Activated B cell treated with CpG ODN at 0.5 μM for 24 hours (primary cell): ENCODE measurements at regions of chr1 and their contacts with region 1.

Region 1: GRCh38 chr1:110034451-110035235 is at the start of gene STRIP1:
- DNase-seq: peak; percentile 81
- ATAC-seq: peak; percentile 92
- H3K4me3 Mint-ChIP-seq: peak within 1 kb of the TSS; percentile 93
- H3K27ac Mint-ChIP-seq: peak within 1 kb of the TSS; percentile 90
- H3K4me1 Mint-ChIP-seq: peaks cover 41% of the 10 kb centered on the region
- H3K27me3 Mint-ChIP-seq: no peaks in the 10 kb centered on the region
- CTCF ChIP-seq: no peak
- total RNA-seq, gene STRIP1: 60.4 and 77.3 TPM in 2 replicates

Region 2: GRCh38 chr1:109099938-109100773 is 934.5 kb before region 1 on chr1:
- CTCF ChIA-PET with region 1: no interaction called
- POLR2A ChIA-PET with region 1: interaction called, 3 read pairs
- intact Hi-C with region 1: loop called (anchors 1 kb)
- DNase-seq: peak; percentile 93
- ATAC-seq: peak; percentile 88
- H3K4me3 Mint-ChIP-seq: peak overlapping the region; percentile 95
- H3K27ac Mint-ChIP-seq: peak overlapping the region; percentile 98
- H3K4me1 Mint-ChIP-seq: peaks cover 19% of the 10 kb centered on the region
- H3K27me3 Mint-ChIP-seq: no peaks in the 10 kb centered on the region
- CTCF ChIP-seq: peak; percentile 37

Region 3: DNA sequence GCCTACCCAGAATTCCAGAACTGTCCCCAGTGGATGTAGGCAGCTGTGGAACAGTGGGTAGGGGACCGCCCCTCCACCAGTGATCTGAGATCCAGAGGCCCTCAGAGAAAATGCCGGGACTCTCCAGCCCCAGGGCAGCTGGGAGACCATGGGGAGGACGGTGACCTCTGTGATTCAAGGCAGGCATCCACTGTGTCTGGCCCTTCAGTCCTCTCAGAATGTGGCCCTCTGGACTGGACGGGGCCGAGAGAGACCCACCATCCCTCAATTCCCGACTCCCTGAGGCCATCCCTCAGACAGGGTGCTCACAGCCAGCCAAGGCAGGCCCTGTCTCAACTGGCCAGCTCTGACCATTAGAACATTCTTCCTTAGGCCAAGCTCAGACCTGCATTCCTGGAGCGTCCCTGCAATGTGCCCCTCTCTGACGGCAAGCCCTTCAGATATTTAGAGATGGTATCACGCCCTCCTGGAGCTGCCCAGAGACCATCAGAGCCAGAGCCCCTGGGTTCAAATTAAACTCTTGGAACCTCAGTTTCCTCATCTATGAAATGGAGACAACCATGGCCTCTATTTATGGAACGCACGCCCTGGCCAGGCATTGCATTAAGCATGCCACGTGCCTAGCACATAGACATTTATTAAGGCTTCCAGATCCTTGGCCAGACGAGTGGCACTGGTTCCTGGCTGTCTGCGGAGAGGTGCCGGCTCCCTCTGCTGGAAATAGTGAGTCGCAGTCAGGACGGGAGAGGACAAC is 261.3 kb before region 1 on chr1:
- CTCF ChIA-PET with region 1: interaction called, 5 read pairs
- POLR2A ChIA-PET with region 1: interaction called, 6 read pairs
- intact Hi-C with region 1: loop called (anchors 1 kb)
- DNase-seq: peak; percentile 37
- ATAC-seq: peak; percentile 81
- H3K4me3 Mint-ChIP-seq: no peak overlapping the region
- H3K27ac Mint-ChIP-seq: no peak overlapping the region
- H3K4me1 Mint-ChIP-seq: peaks cover 3% of the 10 kb centered on the region
- H3K27me3 Mint-ChIP-seq: peaks cover 12% of the 10 kb centered on the region
- CTCF ChIP-seq: no peak

Region 4: DNA sequence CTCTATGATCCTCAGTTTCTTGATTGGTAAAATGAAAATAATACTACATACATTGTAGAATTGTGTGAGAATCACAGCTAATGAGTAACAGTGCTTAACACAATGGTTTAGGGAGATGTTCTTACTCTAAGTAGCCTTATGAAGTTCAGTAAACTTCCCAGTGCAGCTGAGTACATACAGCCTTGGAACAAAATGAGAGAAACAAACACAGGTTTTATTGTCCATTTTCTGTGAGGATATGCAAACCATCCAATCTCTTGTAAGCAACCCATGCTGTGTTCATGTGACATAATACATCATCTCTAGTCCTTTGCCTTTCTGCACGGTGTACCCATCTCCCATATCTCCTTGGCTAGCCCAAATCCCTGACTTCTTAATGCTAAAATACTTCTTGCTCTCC is 14.9 kb before region 1 on chr1:
- CTCF ChIA-PET with region 1: interaction called, 28 read pairs
- POLR2A ChIA-PET with region 1: interaction called, 3 read pairs
- intact Hi-C with region 1: no loop called
- DNase-seq: no peak
- ATAC-seq: no peak
- H3K4me3 Mint-ChIP-seq: no peak overlapping the region
- H3K27ac Mint-ChIP-seq: no peak overlapping the region
- H3K4me1 Mint-ChIP-seq: peaks cover 10% of the 10 kb centered on the region
- H3K27me3 Mint-ChIP-seq: no peaks in the 10 kb centered on the region
- CTCF ChIP-seq: no peak

Region 5: GRCh38 chr1:110407260-110408210 is 372.9 kb after region 1 on chr1 and contains the start of gene LAMTOR5:
- CTCF ChIA-PET with region 1: no interaction called
- POLR2A ChIA-PET with region 1: interaction called, 8 read pairs
- intact Hi-C with region 1: loop called (anchors 2 kb)
- DNase-seq: peak; percentile 84
- ATAC-seq: peak; percentile 91
- H3K4me3 Mint-ChIP-seq: peak within 1 kb of the TSS; percentile 97
- H3K27ac Mint-ChIP-seq: peak within 1 kb of the TSS; percentile 96
- H3K4me1 Mint-ChIP-seq: peaks cover 26% of the 10 kb centered on the region
- H3K27me3 Mint-ChIP-seq: no peaks in the 10 kb centered on the region
- CTCF ChIP-seq: no peak
- total RNA-seq, gene LAMTOR5: 160 and 172 TPM in 2 replicates

Region 6: DNA sequence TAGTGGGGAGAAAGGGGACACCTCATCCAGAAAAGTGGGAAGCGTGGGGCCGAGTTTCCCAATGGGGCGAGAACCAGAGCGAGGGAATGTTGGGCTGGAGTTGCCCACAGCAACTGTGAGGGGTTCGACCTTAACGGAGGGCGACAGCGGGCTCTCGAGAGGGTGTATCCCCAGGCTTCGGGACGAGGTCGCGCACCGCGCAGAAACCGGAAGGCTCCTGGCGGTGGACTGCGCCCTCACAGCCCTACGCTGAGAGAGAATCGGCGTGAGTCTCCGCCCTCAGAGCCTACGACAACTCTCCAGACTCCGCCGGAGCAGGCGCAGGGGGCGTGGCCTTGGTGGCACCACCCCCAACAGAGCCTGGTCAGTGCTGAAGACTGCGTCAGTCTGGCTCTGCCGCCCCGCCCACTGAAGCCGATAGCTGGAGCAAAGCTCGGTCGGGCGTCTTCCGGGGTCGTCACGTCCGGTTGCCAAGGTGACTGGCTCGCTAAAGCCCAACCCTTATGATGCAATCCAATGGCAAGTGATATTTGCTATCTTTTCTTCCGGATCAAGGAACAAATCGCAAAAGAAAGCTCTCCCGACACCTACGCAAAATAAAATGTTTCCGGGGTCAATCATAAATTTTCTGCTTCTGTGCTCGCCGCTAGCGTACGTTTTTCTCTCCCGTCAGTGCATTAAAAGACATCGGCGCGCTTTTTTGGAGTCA is 929.2 kb after region 1 on chr1 and contains the start of gene LRIF1:
- CTCF ChIA-PET with region 1: no interaction called
- POLR2A ChIA-PET with region 1: no interaction called
- intact Hi-C with region 1: loop called (anchors 1 kb)
- DNase-seq: peak; percentile 99
- ATAC-seq: peak; percentile 97
- H3K4me3 Mint-ChIP-seq: peak within 1 kb of the TSS; percentile 84
- H3K27ac Mint-ChIP-seq: peak within 1 kb of the TSS; percentile 91
- H3K4me1 Mint-ChIP-seq: peaks cover 38% of the 10 kb centered on the region
- H3K27me3 Mint-ChIP-seq: peaks cover 10% of the 10 kb centered on the region
- CTCF ChIP-seq: no peak
- total RNA-seq, gene LRIF1: 16.7 and 17.0 TPM in 2 replicates